ENCODE measurements at regions of chr17 and their contacts with region 1.

Region 1: GRCh38 chr17:79947351-79948031 is 88.2 kb downstream of the TBC1D16 start:
- DNase-seq: peak; percentile 99
- H3K4me3 Mint-ChIP-seq: peak overlapping the region; percentile 17
- H3K27ac Mint-ChIP-seq: peak overlapping the region; percentile 85
- H3K4me1 Mint-ChIP-seq: peaks cover 22% of the 10 kb centered on the region
- H3K27me3 Mint-ChIP-seq: no peaks in the 10 kb centered on the region
- CTCF ChIP-seq: no peak

Region 2: DNA sequence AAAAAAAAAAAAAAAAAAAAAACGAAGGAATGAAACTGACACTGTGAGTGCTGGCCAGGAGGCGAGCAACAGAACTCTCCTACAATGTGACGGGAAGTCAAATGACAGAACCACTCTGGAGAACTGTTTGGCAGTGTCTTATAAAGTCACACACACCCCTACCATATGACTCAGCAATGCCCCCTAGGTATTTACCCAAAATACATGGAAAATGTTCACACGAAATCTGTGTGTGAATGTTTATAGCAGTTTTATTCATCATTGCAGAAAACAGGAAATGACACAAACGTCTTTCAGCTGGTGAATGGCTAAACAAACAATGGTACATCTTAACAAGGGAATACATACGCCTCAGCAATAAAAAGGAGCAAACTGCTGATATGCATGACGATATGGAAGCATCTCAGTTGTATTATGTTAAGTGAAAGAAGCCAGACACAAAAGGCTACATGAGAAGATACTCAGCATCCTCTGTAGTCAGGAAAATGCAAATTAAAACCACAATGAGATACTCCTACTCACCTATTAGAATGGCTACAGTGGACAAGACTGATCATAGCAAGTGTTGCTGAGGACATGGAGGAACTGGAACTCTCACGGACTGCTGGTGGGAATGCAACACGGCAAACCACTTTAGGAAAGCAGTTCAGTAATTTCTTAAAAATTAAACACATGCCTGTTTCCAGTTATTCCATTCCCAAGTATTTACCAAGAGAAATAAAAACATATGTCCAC is 13.5 kb after region 1 on chr17:
- CTCF ChIA-PET with region 1: interaction called, 3 read pairs
- POLR2A ChIA-PET with region 1: interaction called, 10 read pairs
- intact Hi-C with region 1: no loop called
- DNase-seq: peak; percentile 88
- H3K4me3 Mint-ChIP-seq: peak overlapping the region; percentile 19
- H3K27ac Mint-ChIP-seq: no peak overlapping the region
- H3K4me1 Mint-ChIP-seq: peaks cover 12% of the 10 kb centered on the region
- H3K27me3 Mint-ChIP-seq: no peaks in the 10 kb centered on the region
- CTCF ChIP-seq: no peak

Measured in MCF 10A (cell line).